Activated B cell treated with CpG ODN at 0.5 μM for 24 hours (primary cell): ENCODE measurements at regions of chr6 and their contacts with region 1.

Region 1: DNA sequence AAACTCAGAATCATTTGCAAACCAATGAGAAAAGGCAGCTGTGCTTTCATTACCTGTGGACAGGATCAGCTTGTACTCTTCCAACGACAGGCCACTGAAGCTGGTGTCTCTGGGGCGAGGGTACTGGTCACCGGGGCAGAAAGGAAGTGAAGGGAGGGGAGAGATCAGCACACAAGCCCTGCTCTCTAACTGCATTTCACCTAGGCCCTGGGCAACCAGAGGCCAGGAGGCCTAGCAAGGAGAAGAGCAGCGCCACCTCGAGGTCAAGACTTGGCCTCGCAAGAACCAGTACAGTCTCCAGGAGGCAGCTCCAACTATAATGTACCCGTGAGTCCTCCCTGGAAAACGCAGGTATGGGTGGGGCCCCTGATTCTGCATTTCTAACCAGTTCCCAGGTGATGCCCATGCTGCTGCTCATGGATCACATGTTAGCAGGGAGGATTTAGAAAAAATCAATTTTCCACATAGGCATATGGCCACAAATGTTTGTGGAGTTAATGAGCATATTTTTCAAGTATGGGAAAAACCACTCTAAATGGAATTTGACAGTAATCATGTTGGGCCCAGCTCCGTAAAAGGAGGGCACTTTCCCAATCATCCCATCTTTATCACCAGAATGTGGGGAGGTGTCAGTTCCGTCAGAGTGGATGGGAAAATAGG is 11.0 kb downstream of the UQCC2 start:
- DNase-seq: peak; percentile 58
- ATAC-seq: peak; percentile 56
- H3K4me3 Mint-ChIP-seq: peak overlapping the region; percentile 28
- H3K27ac Mint-ChIP-seq: peak overlapping the region; percentile 79
- H3K4me1 Mint-ChIP-seq: peaks cover 69% of the 10 kb centered on the region
- H3K27me3 Mint-ChIP-seq: no peaks in the 10 kb centered on the region
- CTCF ChIP-seq: no peak

Region 2: DNA sequence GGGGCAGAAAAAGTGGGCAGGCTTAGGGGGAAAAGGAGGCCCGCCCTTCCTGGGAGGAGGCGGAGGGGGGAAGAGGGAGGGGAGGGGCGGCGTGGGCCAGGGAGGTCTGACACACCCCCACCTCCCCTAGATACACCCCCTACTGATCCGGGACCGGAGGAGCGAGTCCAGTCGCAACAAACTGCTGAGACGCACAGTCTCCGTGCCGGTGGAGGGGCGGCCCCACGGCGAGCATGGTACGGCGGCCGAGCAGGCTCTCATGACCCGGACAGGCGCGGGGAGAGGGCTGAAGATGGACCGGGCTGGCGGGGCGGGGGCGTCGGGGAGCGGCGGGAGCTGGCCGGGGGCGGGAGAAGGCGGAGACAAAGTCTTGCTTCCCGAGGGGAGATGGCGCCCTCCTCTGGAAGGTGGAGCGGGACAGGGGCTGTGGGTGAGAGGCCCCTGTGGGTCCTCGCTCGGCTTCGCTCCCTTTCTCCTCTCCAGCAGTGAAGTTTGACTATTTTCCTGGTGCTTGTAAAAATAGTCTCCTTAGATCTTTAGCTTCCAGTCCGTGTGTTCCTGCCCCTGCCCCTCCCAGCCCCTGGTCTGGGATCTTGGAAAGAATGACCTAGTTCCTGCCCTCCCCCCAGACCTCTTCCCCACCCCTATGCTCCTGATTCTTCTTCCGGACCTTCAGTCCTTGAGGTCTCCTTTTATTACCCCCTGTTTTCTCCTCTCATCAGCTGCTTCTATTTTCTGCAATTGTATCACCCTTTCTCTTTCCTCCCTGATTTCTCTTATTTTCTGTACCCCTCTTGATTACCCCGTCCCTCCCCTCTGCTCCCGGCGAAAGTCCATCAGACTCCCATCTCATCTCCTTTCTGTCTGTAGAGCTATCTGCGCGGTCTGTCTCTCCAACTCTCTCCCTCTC is 274.6 kb before region 1 on chr6:
- CTCF ChIA-PET with region 1: no interaction called
- POLR2A ChIA-PET with region 1: no interaction called
- intact Hi-C with region 1: loop called (anchors 5 kb)
- DNase-seq: peak; percentile 68
- ATAC-seq: peak; percentile 60
- H3K4me3 Mint-ChIP-seq: peak overlapping the region; percentile 87
- H3K27ac Mint-ChIP-seq: peak overlapping the region; percentile 89
- H3K4me1 Mint-ChIP-seq: peaks cover 66% of the 10 kb centered on the region
- H3K27me3 Mint-ChIP-seq: no peaks in the 10 kb centered on the region
- CTCF ChIP-seq: no peak

Region 3: DNA sequence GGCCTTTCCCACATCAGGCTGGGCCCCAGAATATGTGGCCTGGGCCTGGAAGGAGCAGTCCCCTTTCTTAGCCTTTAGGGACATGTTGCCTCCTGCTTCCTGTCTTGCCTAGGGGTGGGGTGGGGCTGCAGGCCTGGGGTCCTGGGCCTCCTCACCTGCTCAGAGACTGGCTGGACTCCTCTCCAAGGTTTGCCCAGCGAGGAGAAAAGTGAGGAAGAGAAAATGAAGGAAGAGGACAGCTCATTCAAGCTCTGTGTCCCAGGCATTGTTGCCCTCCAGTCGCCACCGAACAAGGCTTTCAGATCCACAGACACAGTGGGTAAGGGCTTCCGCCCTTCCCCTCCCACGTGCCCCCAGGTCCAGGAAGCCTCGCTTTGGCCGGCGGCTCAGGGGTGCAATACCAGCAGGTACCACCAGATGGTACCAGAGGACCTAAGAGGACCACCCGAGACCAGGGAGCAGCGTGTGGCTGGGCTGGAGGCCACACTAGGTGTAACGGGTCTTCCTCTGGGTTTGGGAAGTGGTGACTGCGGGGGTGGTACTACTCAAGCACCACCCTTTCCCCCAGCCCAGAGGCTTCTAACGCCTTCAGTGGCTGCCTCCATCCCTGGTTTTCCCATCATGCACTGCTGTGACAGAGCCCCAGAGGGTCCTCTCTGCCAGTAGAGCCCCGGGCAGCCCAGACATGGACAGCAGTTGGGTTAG is 115.0 kb before region 1 on chr6:
- CTCF ChIA-PET with region 1: interaction called, 42 read pairs
- POLR2A ChIA-PET with region 1: interaction called, 6 read pairs
- intact Hi-C with region 1: loop called (anchors 1 kb)
- DNase-seq: peak; percentile 90
- ATAC-seq: peak; percentile 94
- H3K4me3 Mint-ChIP-seq: peak overlapping the region; percentile 61
- H3K27ac Mint-ChIP-seq: peak overlapping the region; percentile 93
- H3K4me1 Mint-ChIP-seq: peaks cover 31% of the 10 kb centered on the region
- H3K27me3 Mint-ChIP-seq: no peaks in the 10 kb centered on the region
- CTCF ChIP-seq: peak; percentile 96

Region 4: GRCh38 chr6:33592411-33593054 is 108.0 kb before region 1 on chr6:
- CTCF ChIA-PET with region 1: interaction called, 42 read pairs
- POLR2A ChIA-PET with region 1: interaction called, 9 read pairs
- intact Hi-C with region 1: loop called (anchors 1 kb)
- DNase-seq: peak; percentile 64
- ATAC-seq: peak; percentile 51
- H3K4me3 Mint-ChIP-seq: peak overlapping the region; percentile 58
- H3K27ac Mint-ChIP-seq: peak overlapping the region; percentile 93
- H3K4me1 Mint-ChIP-seq: peaks cover 68% of the 10 kb centered on the region
- H3K27me3 Mint-ChIP-seq: no peaks in the 10 kb centered on the region
- CTCF ChIP-seq: no peak

Region 5: GRCh38 chr6:33607784-33608161 is 92.7 kb before region 1 on chr6:
- CTCF ChIA-PET with region 1: interaction called, 18 read pairs
- POLR2A ChIA-PET with region 1: no interaction called
- intact Hi-C with region 1: no loop called
- DNase-seq: no peak
- ATAC-seq: peak; percentile 87
- H3K4me3 Mint-ChIP-seq: no peak overlapping the region
- H3K27ac Mint-ChIP-seq: no peak overlapping the region
- H3K4me1 Mint-ChIP-seq: peaks cover 26% of the 10 kb centered on the region
- H3K27me3 Mint-ChIP-seq: no peaks in the 10 kb centered on the region
- CTCF ChIP-seq: no peak

Region 6: GRCh38 chr6:33668927-33669326 is 31.6 kb before region 1 on chr6:
- CTCF ChIA-PET with region 1: interaction called, 3 read pairs
- POLR2A ChIA-PET with region 1: interaction called, 4 read pairs
- intact Hi-C with region 1: loop called (anchors 1 kb)
- DNase-seq: no peak
- ATAC-seq: peak; percentile 91
- H3K4me3 Mint-ChIP-seq: no peak overlapping the region
- H3K27ac Mint-ChIP-seq: peak overlapping the region; percentile 65
- H3K4me1 Mint-ChIP-seq: peaks cover 14% of the 10 kb centered on the region
- H3K27me3 Mint-ChIP-seq: no peaks in the 10 kb centered on the region
- CTCF ChIP-seq: no peak

Region 7: GRCh38 chr6:33711140-33712129 is 10.9 kb after region 1 on chr6 and contains the start of gene UQCC2:
- CTCF ChIA-PET with region 1: interaction called, 28 read pairs
- POLR2A ChIA-PET with region 1: interaction called, 23 read pairs
- intact Hi-C with region 1: loop called (anchors 2 kb)
- DNase-seq: peak; percentile 93
- ATAC-seq: peak; percentile 86
- H3K4me3 Mint-ChIP-seq: peak within 1 kb of the TSS; percentile 98
- H3K27ac Mint-ChIP-seq: peak within 1 kb of the TSS; percentile 99
- H3K4me1 Mint-ChIP-seq: peaks cover 29% of the 10 kb centered on the region
- H3K27me3 Mint-ChIP-seq: no peaks in the 10 kb centered on the region
- CTCF ChIP-seq: no peak
- total RNA-seq, gene UQCC2: 26.2 and 37.5 TPM in 2 replicates

Region 8: DNA sequence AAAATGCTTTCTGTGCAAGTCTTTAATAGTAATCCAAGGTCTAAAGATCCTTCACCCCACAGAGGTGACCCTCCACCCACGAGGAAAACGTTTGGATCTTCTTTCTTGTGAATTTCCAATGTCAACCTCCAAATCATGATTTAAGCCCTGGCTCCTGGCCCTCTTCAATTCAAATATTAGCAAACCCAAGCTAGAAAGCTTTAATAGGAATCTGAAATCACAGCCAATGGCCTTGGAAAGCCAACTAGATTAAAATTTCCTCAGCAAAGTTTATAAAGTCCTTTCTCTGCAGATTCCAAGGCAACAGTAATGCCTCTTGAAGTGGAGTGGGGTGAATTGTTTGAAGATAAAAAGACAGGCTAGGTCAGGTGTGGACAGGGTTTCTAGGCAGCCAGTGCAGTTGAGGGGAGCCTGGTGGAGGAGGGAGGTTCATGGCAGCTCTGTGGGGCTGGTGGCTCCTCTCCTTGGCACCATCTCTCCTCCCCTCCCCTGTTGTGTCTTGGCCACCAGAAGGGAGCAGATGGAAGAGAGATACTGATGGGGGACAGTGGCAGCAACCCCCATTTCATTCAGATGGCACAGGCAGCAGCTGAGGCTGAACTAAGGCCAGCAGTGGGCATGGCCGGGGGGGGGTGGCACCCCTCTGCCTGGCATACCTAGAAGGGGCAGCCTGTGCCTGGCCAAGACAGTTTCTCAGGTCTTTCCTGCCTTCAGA is 23.0 kb after region 1 on chr6:
- CTCF ChIA-PET with region 1: no interaction called
- POLR2A ChIA-PET with region 1: no interaction called
- intact Hi-C with region 1: no loop called
- DNase-seq: no peak
- ATAC-seq: no peak
- H3K4me3 Mint-ChIP-seq: no peak overlapping the region
- H3K27ac Mint-ChIP-seq: no peak overlapping the region
- H3K4me1 Mint-ChIP-seq: peaks cover 38% of the 10 kb centered on the region
- H3K27me3 Mint-ChIP-seq: peaks cover 18% of the 10 kb centered on the region
- CTCF ChIP-seq: no peak